ENCODE measurements at regions of chr4 and their contacts with region 1.

Region 1: DNA sequence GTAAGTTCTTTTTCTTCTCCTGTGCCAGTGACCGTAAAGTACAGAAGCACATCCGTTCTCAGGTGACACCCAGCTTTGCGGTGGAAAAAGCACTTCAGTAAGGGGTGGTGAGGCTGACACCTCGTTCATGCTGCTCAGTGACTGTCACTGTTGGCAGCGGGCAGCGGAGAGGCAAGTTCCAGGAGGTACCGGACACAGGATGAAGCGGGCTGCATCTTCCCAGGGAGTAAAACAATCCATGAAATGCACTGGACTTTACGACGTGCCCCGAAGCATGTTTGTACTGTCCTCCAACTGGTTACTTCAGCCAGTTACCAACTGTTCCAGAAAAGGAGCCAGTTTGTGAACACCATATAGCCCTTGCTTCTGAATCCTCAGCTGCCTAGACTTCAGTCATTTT is 110.7 kb downstream of the ZNF827 start:
- DNase-seq: no peak
- ATAC-seq: no peak
- H3K4me3 ChIP-seq: no peak overlapping the region
- H3K27ac ChIP-seq: no peak overlapping the region
- H3K4me1 ChIP-seq: no peaks in the 10 kb centered on the region
- H3K27me3 ChIP-seq: no peaks in the 10 kb centered on the region
- CTCF ChIP-seq: no peak
- POLR2A ChIP-seq: no peak
- RAD21 ChIP-seq: no peak

Region 2: DNA sequence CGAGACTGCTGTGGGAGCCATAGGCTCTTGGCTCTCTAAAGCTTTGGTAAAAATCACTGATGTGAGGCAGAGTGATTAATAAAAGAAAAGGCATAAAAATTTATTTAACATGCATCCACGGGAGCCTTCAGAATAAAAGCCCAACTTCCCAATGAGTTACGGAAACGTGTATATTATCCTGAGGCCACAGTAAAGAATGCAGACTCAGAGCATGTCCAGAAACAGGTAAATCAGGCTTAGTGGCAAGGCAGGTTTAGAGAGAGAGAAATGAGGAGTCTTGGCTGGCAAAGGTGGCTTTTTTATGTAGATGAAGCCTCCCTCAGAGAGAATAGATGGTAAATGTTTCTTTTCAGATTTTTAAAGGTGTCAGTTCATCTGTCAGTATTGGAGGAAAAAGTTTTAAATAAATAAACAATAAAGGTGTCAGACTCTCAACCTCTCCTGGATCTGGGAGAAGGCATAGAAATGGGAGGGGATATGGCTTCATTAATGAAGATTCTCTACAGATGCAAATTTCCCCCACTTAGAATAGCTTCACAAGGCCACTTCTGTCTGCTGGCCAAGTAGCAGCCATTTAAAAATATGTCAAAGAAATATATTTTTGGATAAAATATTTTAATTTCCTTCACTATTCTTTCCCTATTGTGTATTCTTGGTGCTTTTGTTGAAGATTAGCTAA is 123.9 kb before region 1 on chr4:
- CTCF ChIA-PET with region 1: no interaction called
- POLR2A ChIA-PET with region 1: no interaction called
- dilution Hi-C with region 1: no loop called
- in situ Hi-C with region 1: no loop called
- intact Hi-C with region 1: no loop called
- DNase-seq: no peak
- ATAC-seq: no peak
- H3K4me3 ChIP-seq: no peak overlapping the region
- H3K27ac ChIP-seq: no peak overlapping the region
- H3K4me1 ChIP-seq: no peaks in the 10 kb centered on the region
- H3K27me3 ChIP-seq: no peaks in the 10 kb centered on the region
- CTCF ChIP-seq: no peak
- POLR2A ChIP-seq: no peak
- RAD21 ChIP-seq: no peak

Region 3: DNA sequence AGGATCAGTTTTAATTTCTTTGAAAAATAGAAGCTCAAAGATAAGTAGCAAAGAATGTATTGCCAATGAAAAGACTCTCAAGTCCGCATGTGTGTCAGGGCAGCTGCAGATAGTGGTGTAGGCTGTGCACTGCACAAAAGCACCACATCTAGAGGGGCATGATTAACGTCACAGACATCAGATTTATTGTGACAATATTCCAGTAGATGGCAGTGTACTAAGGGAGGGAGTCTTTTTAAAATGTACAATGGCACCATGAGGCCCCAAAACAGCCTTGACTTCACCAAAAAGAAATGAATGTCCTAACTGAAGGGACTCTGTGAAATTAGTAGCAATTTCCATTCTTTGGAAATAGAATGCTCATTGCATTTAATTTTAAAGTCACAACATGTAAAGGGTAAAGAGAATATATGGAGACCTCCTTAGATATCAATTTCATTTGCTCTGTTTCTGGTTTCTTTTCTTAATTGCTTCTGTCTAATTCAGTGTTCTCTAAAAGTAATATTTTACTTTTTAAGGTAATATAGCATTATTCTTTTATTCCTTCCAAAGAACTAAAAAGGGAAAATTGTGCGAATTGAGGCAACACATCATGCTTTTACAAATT is 12.4 kb after region 1 on chr4:
- CTCF ChIA-PET with region 1: no interaction called
- POLR2A ChIA-PET with region 1: no interaction called
- dilution Hi-C with region 1: no loop called
- in situ Hi-C with region 1: no loop called
- intact Hi-C with region 1: loop called (anchors 1 kb)
- DNase-seq: peak; percentile 38
- ATAC-seq: peak; percentile 71
- H3K4me3 ChIP-seq: no peak overlapping the region
- H3K27ac ChIP-seq: no peak overlapping the region
- H3K4me1 ChIP-seq: peaks cover 3% of the 10 kb centered on the region
- H3K27me3 ChIP-seq: no peaks in the 10 kb centered on the region
- CTCF ChIP-seq: peak; percentile 38
- POLR2A ChIP-seq: no peak
- RAD21 ChIP-seq: peak; percentile 32

Measured in IMR-90 (cell line).